Activated T-helper 1 cell treated with anti-CD3 and anti-CD28 coated beads, Interleukin-12 subunit alpha, Interleukin-12 subunit beta, Interleukin-2, Interleukin-4 antibody, amounts not matched to agents 30 ng/mL and 10 ng/mL and 1 ng/mL, durations not matched to agents 14 hours and 24 hours and 36 hours (primary cell): ENCODE measurements at regions of chr5 and their contacts with region 1.

Region 1: DNA sequence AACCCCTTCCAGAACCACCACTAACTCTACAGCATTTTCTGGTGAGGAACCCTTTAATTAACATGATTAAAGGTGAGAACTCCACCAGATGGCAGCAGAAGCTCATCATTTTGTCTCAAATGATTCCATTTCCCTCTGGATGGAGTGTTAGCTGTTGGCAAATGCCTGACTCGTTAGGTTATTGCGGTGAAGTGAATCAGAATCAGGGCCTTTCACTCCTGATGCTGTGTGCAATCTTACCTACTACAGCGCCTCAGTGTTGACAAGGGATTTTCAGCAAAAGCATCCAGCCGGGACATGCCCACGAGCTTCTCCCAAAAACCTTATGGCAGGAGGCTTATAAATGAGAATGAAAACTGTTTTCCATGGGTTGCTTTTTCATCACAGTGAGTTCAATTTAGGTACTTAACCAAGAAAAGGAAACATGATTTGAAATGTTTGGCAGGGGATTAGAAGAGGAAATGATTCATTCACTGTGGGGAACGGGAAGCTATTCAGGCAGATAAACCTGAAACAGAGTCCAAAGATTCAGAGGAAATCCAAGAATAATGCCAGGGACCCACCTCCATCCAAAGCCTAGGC is 48.0 kb upstream of the CAST start:
- DNase-seq: peak; percentile 16
- H3K4me3 Mint-ChIP-seq: no peak overlapping the region
- H3K27ac Mint-ChIP-seq: no peak overlapping the region
- H3K4me1 Mint-ChIP-seq: peaks cover 6% of the 10 kb centered on the region
- H3K27me3 Mint-ChIP-seq: peaks cover 43% of the 10 kb centered on the region

Region 2: GRCh38 chr5:96657087-96657665 is 43.0 kb after region 1 on chr5:
- intact Hi-C with region 1: loop called (anchors 2 kb)
- DNase-seq: peak; percentile 59
- H3K4me3 Mint-ChIP-seq: peak overlapping the region; percentile 17
- H3K27ac Mint-ChIP-seq: peak overlapping the region; percentile 4
- H3K4me1 Mint-ChIP-seq: peaks cover 64% of the 10 kb centered on the region
- H3K27me3 Mint-ChIP-seq: peaks cover 43% of the 10 kb centered on the region

Region 3: DNA sequence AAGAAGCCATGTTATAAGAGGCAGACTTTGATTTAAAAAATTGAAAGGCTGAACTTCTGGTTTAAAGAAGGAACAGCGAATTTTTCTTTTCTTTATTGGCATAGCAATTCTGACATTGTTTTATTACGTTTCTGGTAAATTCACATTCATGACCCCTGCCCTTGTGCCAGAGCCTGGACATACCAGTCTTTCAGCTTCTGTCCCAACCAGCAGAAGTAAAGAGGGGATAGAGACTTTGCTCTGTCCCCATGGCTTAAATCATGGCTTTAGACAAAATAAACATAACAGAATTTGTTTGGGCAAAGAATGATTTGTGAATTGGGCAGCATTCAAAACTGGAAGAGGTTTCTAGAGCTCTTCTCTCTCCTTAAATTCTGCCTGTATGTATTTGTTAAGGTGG is 63.3 kb after region 1 on chr5:
- intact Hi-C with region 1: no loop called
- DNase-seq: no peak
- H3K4me3 Mint-ChIP-seq: no peak overlapping the region
- H3K27ac Mint-ChIP-seq: no peak overlapping the region
- H3K4me1 Mint-ChIP-seq: peaks cover 11% of the 10 kb centered on the region
- H3K27me3 Mint-ChIP-seq: no peaks in the 10 kb centered on the region

Region 4: DNA sequence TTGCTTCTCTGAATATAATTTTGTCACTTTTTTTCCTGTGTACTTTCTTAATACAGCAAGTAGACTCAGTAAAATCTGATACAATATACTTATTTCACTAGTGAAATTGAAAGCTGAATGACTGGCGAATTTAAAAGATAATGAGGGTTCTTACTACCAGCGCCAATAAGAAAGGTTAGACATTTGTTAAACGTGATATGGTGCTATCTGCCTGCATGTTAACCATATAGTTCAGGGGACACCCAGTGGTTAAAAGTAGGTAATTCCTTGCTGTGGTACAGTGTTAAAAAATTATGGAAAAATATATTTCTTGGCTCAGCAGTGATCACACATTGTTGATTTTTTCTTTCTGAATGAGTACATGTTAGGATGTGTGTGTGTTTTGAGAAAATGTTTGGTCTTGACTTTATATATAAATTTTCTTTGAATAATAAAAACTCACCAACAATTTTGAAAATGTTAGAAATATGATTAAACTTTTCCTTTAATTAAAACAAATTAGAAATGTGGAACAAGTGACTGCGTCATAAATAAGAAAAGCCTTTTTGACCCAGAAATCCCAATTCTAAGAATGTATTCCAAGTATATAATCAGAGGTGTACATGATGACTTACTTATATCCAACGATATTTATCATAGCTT is 73.7 kb after region 1 on chr5:
- intact Hi-C with region 1: loop called (anchors 1 kb)
- DNase-seq: no peak
- H3K4me3 Mint-ChIP-seq: no peak overlapping the region
- H3K27ac Mint-ChIP-seq: no peak overlapping the region
- H3K4me1 Mint-ChIP-seq: peaks cover 13% of the 10 kb centered on the region
- H3K27me3 Mint-ChIP-seq: no peaks in the 10 kb centered on the region

Region 5: DNA sequence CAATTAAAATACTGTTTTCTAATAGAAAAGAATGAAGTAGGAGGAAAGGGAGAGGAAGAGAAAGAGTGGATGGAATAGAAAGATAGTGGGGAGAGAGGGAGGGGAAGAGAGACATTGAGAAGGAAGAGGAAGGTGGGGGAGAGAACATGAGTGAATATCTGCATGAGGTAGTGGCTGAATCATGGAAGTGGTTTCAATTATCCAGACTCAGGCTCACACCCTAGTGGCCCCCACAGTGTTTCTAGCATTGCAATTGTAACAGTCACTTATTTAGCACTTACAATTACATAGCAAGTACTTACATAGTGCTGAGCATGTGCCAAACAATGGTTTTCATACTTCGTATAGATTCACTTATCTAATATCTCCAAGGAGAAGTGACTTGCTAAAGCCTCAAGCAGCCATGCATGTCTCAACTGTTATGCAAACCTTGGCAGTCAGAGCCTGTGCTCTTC is 120.7 kb after region 1 on chr5:
- intact Hi-C with region 1: loop called (anchors 2 kb)
- DNase-seq: no peak
- H3K4me3 Mint-ChIP-seq: no peak overlapping the region
- H3K27ac Mint-ChIP-seq: no peak overlapping the region
- H3K4me1 Mint-ChIP-seq: peaks cover 13% of the 10 kb centered on the region
- H3K27me3 Mint-ChIP-seq: no peaks in the 10 kb centered on the region

Region 6: DNA sequence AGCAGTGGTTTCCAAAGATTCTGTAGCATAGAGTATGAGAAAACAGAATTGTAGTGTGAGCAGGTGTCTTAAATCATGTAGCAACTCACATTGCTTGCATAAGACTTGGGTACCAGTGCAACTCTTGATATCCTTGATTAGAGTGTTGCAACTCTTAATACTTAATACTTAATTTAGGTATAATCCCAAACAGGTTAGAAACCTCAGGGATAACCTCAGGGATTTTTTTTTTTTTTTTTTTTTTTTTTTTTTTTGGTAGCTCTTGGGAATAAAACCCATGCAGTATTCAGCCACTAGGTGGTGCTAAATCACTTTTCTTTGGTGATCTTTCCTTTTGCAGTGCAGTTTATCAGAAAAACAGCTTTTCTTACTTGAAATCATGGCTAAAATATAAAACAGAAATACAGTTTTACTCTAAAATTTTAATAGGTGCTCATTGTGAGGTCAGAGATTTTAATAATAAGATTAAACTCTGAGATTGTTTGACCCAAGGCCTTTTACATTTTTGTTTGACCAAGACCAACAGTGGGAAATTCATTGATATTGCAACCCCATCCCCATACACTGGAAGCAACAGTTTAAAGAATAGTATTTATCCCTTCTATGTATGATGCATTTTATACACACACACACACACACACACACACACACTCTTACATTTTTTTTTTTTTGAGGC is 138.3 kb after region 1 on chr5:
- intact Hi-C with region 1: loop called (anchors 1 kb)
- DNase-seq: no peak
- H3K4me3 Mint-ChIP-seq: no peak overlapping the region
- H3K27ac Mint-ChIP-seq: no peak overlapping the region
- H3K4me1 Mint-ChIP-seq: peaks cover 5% of the 10 kb centered on the region
- H3K27me3 Mint-ChIP-seq: no peaks in the 10 kb centered on the region